Activated T-helper 2 cell treated with anti-CD3 and anti-CD28 coated beads, Interferon-gamma antibody, Interleukin-2, Interleukin-4, amounts not matched to agents 10 μg/mL and 5 μg/mL and 100 μg/mL, durations not matched to agents 14 hours and 24 hours and 36 hours (primary cell): ENCODE measurements at regions of chr14 and their contacts with region 1.

Region 1: GRCh38 chr14:99266181-99267178 is 5.5 kb downstream of the BCL11B start:
- DNase-seq: peak; percentile 83
- H3K4me3 Mint-ChIP-seq: peak overlapping the region; percentile 85
- H3K27ac Mint-ChIP-seq: peak overlapping the region; percentile 100
- H3K4me1 Mint-ChIP-seq: peaks cover 65% of the 10 kb centered on the region
- H3K27me3 Mint-ChIP-seq: no peaks in the 10 kb centered on the region

Region 2: DNA sequence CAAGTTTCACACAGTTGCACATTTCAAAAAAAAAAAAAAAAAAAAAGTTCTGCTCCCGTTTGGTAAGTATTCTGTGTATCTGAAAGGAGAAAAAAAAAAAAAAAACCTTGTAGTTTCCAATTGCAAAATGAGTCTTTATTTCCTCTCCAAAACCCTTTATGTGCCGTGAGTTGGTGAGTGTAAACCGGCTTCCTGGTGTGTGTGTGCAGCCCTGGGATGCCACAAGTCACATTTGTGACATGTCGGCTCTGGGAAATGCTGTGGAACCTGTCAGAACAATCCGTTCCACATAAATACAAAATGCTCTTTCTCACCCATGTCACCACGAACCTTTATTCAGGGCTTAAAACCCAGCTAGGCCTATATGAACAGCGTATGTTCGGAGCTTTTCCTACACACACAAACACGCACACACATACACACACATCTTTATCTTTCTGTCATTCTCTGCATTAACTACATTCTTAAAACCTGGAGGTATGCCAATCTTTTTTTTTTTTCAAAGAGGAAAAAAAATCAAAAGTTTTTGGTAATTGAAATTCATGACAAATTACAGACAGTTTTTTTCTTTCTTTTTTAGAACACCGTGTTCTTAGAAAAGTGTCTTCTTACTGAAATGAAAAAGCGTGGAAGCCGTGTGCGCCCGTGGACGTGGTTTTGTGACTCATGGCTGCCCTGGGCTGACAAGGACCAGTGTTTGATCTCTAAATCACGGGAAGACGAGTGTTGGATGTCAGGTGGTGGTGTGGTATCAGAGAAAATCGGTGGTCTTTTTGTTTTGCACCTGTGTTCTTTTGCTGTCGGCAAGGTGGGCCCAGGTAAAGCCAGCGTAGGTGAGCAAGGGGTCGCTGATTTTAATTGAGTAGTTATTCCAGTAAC is 1857.3 kb before region 1 on chr14:
- intact Hi-C with region 1: loop called (anchors 10 kb)
- DNase-seq: peak; percentile 56
- H3K4me3 Mint-ChIP-seq: peak overlapping the region; percentile 64
- H3K27ac Mint-ChIP-seq: peak overlapping the region; percentile 92
- H3K4me1 Mint-ChIP-seq: peaks cover 32% of the 10 kb centered on the region
- H3K27me3 Mint-ChIP-seq: no peaks in the 10 kb centered on the region

Region 3: GRCh38 chr14:98984719-98985041 is 281.8 kb before region 1 on chr14:
- intact Hi-C with region 1: loop called (anchors 5 kb)
- DNase-seq: peak; percentile 82
- H3K4me3 Mint-ChIP-seq: no peak overlapping the region
- H3K27ac Mint-ChIP-seq: peak overlapping the region; percentile 89
- H3K4me1 Mint-ChIP-seq: peaks cover 46% of the 10 kb centered on the region
- H3K27me3 Mint-ChIP-seq: no peaks in the 10 kb centered on the region

Region 4: GRCh38 chr14:99230208-99231151 is 36.0 kb before region 1 on chr14:
- intact Hi-C with region 1: loop called (anchors 5 kb)
- DNase-seq: peak; percentile 82
- H3K4me3 Mint-ChIP-seq: peak overlapping the region; percentile 62
- H3K27ac Mint-ChIP-seq: peak overlapping the region; percentile 93
- H3K4me1 Mint-ChIP-seq: peaks cover 85% of the 10 kb centered on the region
- H3K27me3 Mint-ChIP-seq: no peaks in the 10 kb centered on the region

Region 5: GRCh38 chr14:99252940-99253868 is 13.3 kb before region 1 on chr14:
- intact Hi-C with region 1: loop called (anchors 1 kb)
- DNase-seq: no peak
- H3K4me3 Mint-ChIP-seq: peak overlapping the region; percentile 60
- H3K27ac Mint-ChIP-seq: peak overlapping the region; percentile 88
- H3K4me1 Mint-ChIP-seq: peaks cover 88% of the 10 kb centered on the region
- H3K27me3 Mint-ChIP-seq: no peaks in the 10 kb centered on the region